IMR-90 (cell line): ENCODE measurements at regions of chr1 and their contacts with region 1.

Region 1: GRCh38 chr1:247331172-247331991 is at the start of gene ZNF496:
- DNase-seq: peak; percentile 88
- ATAC-seq: peak; percentile 81
- H3K4me3 ChIP-seq: peak within 1 kb of the TSS; percentile 79
- H3K27ac ChIP-seq: peak within 1 kb of the TSS; percentile 96
- H3K4me1 ChIP-seq: peaks cover 9% of the 10 kb centered on the region
- H3K27me3 ChIP-seq: no peaks in the 10 kb centered on the region
- CTCF ChIP-seq: no peak
- POLR2A ChIP-seq: peak; percentile 78
- RAD21 ChIP-seq: no peak; the same call in 1 of the 2 replicates
- total RNA-seq, gene ZNF496: 8.9 and 11.7 TPM in 2 replicates

Region 2: GRCh38 chr1:246947255-246947654 is 384.1 kb before region 1 on chr1:
- CTCF ChIA-PET with region 1: no interaction called
- POLR2A ChIA-PET with region 1: no interaction called
- dilution Hi-C with region 1: no loop called
- in situ Hi-C with region 1: no loop called
- intact Hi-C with region 1: no loop called
- DNase-seq: peak; percentile 46
- ATAC-seq: peak; percentile 29; the same call in 1 of the 2 replicates
- H3K4me3 ChIP-seq: no peak overlapping the region
- H3K27ac ChIP-seq: no peak overlapping the region
- H3K4me1 ChIP-seq: no peaks in the 10 kb centered on the region
- H3K27me3 ChIP-seq: no peaks in the 10 kb centered on the region
- CTCF ChIP-seq: no peak
- POLR2A ChIP-seq: no peak
- RAD21 ChIP-seq: no peak

Region 3: DNA sequence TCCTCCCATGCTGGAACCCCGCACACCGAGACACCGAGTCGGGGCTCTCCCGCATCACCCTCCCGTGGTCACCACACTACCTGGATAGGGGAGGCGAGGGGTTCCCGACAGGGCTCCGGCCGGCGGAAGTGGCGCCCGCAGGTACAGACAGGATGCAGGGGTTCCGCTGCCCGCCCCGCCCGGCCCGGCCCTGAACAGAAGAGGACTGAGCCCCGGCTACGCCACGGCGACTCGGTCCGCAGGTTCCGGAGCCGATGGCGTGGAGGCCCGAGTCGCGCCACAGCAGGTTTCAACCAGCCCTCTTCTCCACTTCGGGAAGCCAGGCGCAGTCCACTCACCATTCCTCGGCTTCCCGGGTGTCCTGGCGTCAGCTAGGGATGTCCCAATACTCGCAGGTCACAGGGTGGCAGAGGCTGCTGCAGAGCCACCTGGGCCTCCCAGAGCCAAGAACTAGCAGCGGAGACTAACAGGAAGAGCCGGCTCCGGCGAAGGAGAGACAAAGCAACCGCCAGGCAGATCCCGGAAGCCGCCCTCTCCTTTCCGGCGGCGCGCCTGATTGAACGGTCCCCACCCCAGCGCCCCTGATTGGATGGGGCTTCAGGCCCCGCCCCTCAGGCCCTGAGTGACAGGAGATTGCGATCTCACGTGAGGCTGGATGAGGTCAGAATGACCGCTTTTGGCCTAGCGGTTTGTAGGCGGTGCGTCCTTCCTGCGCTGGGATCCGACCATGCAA is 227.4 kb before region 1 on chr1 and contains the start of gene ZNF669:
- CTCF ChIA-PET with region 1: no interaction called
- POLR2A ChIA-PET with region 1: no interaction called
- dilution Hi-C with region 1: no loop called
- in situ Hi-C with region 1: no loop called
- intact Hi-C with region 1: loop called (anchors 2 kb)
- DNase-seq: peak; percentile 97
- ATAC-seq: peak; percentile 98
- H3K4me3 ChIP-seq: peak within 1 kb of the TSS; percentile 92
- H3K27ac ChIP-seq: peak within 1 kb of the TSS; percentile 83
- H3K4me1 ChIP-seq: no peaks in the 10 kb centered on the region
- H3K27me3 ChIP-seq: no peaks in the 10 kb centered on the region
- CTCF ChIP-seq: no peak
- POLR2A ChIP-seq: peak; percentile 95
- RAD21 ChIP-seq: no peak
- total RNA-seq, gene ZNF669: 10.8 and 14.2 TPM in 2 replicates

Region 4: DNA sequence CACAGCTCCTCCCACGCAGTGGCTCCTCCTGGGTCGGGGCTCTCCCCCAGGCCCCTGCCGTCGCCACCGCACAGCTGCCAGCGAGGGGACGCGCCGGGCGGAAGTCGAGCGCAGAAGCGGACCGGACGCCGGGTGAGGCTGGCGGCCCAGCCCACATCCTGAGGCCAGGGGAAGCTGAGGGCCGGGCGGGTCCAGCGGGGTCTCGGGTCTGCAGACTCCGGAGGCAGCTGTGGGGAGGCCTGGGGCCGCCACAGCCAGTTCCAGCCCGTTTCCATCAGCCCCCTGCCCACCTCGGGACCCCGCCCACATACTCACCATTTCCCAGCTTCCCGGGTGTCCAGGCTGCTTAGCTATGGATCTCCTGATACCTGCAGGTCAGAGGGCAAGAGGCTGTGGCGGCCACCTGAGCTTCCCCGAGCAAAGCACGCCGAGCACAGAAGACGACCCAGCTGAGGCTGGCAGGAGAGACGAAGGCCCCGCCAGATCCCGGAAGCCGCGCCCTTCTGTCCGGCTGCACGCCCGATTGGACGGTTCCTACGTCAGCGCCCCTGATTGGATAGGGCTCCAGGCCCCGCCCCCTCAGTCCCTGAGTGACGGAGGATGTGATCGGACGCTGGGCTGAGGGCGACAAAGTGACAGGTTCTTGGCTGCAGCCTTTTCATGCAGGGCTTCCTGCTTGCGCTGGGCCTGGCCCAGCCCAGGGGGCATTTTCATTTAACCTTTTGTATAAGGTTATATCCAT is 120.8 kb before region 1 on chr1:
- CTCF ChIA-PET with region 1: no interaction called
- POLR2A ChIA-PET with region 1: no interaction called
- dilution Hi-C with region 1: no loop called
- in situ Hi-C with region 1: no loop called
- intact Hi-C with region 1: loop called (anchors 5 kb)
- DNase-seq: peak; percentile 85
- ATAC-seq: peak; percentile 100
- H3K4me3 ChIP-seq: peak overlapping the region; percentile 79
- H3K27ac ChIP-seq: peak overlapping the region; percentile 51
- H3K4me1 ChIP-seq: peaks cover 3% of the 10 kb centered on the region
- H3K27me3 ChIP-seq: no peaks in the 10 kb centered on the region
- CTCF ChIP-seq: no peak
- POLR2A ChIP-seq: peak; percentile 83
- RAD21 ChIP-seq: no peak

Region 5: DNA sequence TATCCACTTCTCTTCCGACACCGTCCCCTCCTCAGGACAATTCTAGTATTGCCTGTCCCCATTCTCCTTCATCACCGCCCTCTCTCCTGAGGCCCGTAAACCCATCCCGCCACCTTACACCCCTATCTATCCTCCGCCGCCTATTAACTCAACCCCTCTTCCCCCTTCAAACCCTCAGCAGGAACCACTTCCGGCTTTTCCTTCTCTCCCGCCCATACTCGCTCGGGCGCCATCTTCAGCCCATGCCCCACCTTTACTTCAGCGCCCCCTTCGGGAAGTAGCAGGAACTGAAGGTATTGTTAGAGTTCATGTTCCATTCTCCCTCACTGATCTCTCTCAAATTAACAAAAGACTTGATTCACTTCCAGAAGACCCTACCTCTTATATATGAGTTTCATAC is 43.9 kb before region 1 on chr1:
- CTCF ChIA-PET with region 1: no interaction called
- POLR2A ChIA-PET with region 1: no interaction called
- dilution Hi-C with region 1: no loop called
- in situ Hi-C with region 1: no loop called
- intact Hi-C with region 1: loop called (anchors 1 kb)
- DNase-seq: no peak
- ATAC-seq: no peak
- H3K4me3 ChIP-seq: no peak overlapping the region
- H3K27ac ChIP-seq: no peak overlapping the region
- H3K4me1 ChIP-seq: no peaks in the 10 kb centered on the region
- H3K27me3 ChIP-seq: no peaks in the 10 kb centered on the region
- CTCF ChIP-seq: no peak
- POLR2A ChIP-seq: no peak
- RAD21 ChIP-seq: no peak

Region 6: DNA sequence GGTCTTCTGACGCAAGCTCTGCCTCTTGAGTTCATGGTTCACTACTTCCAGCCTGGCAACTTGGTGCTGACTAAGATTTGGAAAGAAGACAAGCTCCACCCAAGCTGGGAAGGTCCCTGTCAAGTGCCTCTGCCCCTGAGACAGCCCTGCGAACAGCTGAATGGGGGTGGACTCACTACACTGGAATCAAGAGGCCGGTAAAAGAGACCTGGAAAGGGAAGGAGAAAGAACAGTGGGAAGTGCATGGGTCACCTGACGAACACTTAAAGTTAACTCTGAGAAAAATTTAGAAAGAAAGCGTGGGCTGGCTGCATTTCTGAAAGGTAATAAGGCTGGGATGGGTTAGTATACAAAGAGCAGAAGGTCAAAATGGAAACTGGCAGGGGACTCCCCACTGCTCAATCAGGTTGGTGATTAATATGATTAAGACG is 26.4 kb after region 1 on chr1:
- CTCF ChIA-PET with region 1: no interaction called
- POLR2A ChIA-PET with region 1: no interaction called
- dilution Hi-C with region 1: no loop called
- in situ Hi-C with region 1: no loop called
- intact Hi-C with region 1: loop called (anchors 1 kb)
- DNase-seq: peak; percentile 94
- ATAC-seq: peak; percentile 67
- H3K4me3 ChIP-seq: no peak overlapping the region
- H3K27ac ChIP-seq: peak overlapping the region; percentile 39; the same call in 1 of the 2 replicates
- H3K4me1 ChIP-seq: peaks cover 11% of the 10 kb centered on the region; the same call in 1 of the 2 replicates
- H3K27me3 ChIP-seq: no peaks in the 10 kb centered on the region
- CTCF ChIP-seq: no peak
- POLR2A ChIP-seq: no peak
- RAD21 ChIP-seq: no peak

Region 7: GRCh38 chr1:247647864-247648263 is 316.5 kb after region 1 on chr1:
- CTCF ChIA-PET with region 1: no interaction called
- POLR2A ChIA-PET with region 1: no interaction called
- dilution Hi-C with region 1: no loop called
- in situ Hi-C with region 1: no loop called
- intact Hi-C with region 1: no loop called
- DNase-seq: no peak
- ATAC-seq: no peak
- H3K4me3 ChIP-seq: no peak overlapping the region
- H3K27ac ChIP-seq: no peak overlapping the region
- H3K4me1 ChIP-seq: no peaks in the 10 kb centered on the region
- H3K27me3 ChIP-seq: no peaks in the 10 kb centered on the region
- CTCF ChIP-seq: no peak
- POLR2A ChIP-seq: no peak
- RAD21 ChIP-seq: no peak

Region 8: DNA sequence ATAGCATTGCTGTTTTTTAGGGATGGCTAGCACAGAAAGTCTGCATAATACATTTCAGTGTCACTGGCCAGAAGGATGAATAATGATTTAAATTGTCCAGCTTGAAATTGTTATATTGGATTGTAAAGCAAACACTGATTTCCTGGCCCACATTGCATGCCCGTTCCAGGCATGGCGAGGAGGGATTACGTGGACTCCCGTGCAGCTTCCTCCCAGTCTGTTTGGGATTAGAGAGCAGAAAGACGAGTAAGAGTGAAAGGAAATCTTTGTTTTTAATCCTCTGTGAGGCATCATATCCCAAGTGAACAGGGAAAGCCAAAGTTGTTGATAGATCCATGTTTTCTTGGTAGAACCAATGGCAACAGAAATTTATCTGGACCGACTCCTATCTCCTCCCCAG is 534.0 kb after region 1 on chr1:
- CTCF ChIA-PET with region 1: no interaction called
- POLR2A ChIA-PET with region 1: no interaction called
- dilution Hi-C with region 1: no loop called
- in situ Hi-C with region 1: no loop called
- intact Hi-C with region 1: no loop called
- DNase-seq: no peak
- ATAC-seq: no peak
- H3K4me3 ChIP-seq: no peak overlapping the region
- H3K27ac ChIP-seq: no peak overlapping the region
- H3K4me1 ChIP-seq: no peaks in the 10 kb centered on the region
- H3K27me3 ChIP-seq: no peaks in the 10 kb centered on the region
- CTCF ChIP-seq: no peak
- POLR2A ChIP-seq: no peak
- RAD21 ChIP-seq: no peak